CD4-positive, alpha-beta T cell (primary cell): ENCODE measurements at regions of chr5 and their contacts with region 1.

Region 1: DNA sequence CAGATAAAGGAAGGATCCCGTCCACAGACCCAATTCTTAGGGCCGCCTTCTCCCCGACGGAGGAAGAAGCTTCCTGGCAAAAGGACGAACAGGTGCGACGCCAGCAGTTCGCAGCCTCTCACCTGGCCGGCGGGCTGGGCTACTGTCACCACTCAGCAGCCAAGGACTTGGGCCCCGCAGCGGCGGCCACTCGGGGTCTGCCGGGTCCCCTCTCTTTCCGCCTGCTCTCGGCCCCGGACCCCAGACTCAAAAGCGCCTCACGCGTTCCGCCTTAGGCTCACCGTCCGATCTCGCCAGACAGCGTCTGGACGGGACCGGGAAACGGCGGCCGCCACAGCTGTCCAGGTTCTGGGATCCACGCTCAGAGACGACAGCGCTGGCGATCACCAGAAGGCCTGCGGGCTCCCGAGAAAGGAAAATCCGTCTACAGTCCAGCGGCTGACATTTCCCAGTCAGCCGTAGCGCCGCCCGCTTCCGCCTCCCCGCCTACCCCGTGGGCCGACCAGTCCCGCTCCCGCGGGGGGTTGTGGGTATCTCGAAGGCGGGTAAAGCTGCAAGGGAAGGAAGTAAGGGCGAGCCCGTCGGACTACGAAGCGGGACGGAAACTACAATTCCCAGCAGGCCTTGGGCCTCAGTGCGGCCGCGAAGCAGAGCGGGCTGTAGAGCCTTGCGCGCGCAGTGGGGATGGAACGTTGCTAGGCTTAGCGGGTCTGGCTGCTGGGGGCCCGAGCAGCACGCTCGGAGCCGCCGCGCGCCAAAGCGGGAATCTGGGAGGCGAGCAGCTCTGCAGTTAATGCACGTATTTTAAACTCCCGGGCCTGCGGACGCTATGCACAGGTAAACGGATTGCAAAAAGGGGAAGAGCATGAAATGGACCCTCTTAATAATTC is at the starts of genes LMBRD2 and SKP2:
- DNase-seq: peak; percentile 90 to 99 (median 95)
- ATAC-seq: peak; percentile 96
- H3K4me3 ChIP-seq: peak within 1 kb of the TSS; percentile 92
- H3K4me3 Mint-ChIP-seq: peak within 1 kb of the TSS; percentile 95
- H3K27ac ChIP-seq: peak within 1 kb of the TSS; percentile 77 to 82
- H3K27ac Mint-ChIP-seq: peak within 1 kb of the TSS; percentile 86
- H3K4me1 ChIP-seq: peaks cover 30% of the 10 kb centered on the region
- H3K4me1 Mint-ChIP-seq: peaks cover 76% of the 10 kb centered on the region
- H3K27me3 ChIP-seq: no peaks in the 10 kb centered on the region
- H3K27me3 Mint-ChIP-seq: no peaks in the 10 kb centered on the region
- CTCF ChIP-seq: no peak
- total RNA-seq, gene LMBRD2: 4.1 to 4.2 TPM
- total RNA-seq, gene SKP2: 6.3 to 7.2 TPM

Region 2: DNA sequence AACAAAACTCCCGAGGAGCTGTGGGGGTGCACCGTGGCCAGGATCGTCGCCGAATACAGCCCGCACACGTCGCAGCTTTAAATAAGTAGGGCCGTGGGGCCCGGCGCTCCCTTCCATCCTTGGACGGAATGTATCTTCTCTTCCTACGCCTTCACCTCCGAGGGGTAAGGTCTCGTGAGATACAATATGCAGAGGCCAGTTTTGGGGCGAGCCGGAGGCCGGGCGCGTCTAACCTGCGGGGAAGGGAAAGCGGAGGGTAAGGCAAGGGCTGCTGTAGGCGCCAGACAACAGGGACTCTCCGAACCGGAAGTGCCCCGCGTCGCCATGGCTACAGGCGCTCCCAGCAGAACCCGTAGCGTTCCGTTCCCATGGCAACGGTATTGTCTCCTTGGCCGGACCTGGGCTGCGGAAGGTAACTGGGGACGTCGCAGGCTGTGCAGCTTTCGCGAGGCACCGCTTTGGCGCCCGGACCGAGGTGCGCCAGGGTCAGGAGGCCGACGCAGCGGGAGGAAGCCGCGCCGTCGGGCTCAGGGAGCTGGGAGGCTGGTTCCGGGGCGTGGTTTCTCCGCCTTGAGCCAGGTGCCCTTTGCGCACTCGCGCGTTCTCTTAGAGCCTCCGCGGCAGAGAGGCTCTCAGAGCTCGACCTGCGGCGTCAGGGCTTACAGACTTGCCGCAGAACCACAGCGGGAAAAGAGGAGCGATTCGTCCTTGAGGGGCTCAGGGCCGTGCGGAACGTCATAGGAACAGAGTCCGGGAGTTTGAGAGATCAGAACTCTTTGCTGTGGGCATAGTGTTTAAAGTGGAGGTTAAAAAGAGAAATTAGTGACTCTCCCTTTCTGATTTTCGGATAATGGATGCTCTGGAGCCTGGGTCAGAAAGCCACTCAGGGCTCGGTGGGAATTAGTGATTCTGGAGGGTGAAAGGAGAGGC is 1312.6 kb before region 1 on chr5 and contains the start of gene TTC23L:
- CTCF ChIA-PET with region 1: no interaction called
- POLR2A ChIA-PET with region 1: no interaction called
- intact Hi-C with region 1: loop called in 1 of 2 experiments (anchors 10 kb)
- DNase-seq: peak; percentile 84 to 98 (median 87)
- ATAC-seq: peak; percentile 89
- H3K4me3 ChIP-seq: peak within 1 kb of the TSS; percentile 78
- H3K4me3 Mint-ChIP-seq: peak within 1 kb of the TSS; percentile 95
- H3K27ac ChIP-seq: peak within 1 kb of the TSS; percentile 63 to 76
- H3K27ac Mint-ChIP-seq: peak within 1 kb of the TSS; percentile 88
- H3K4me1 ChIP-seq: peaks cover 16% of the 10 kb centered on the region
- H3K4me1 Mint-ChIP-seq: peaks cover 17% of the 10 kb centered on the region
- H3K27me3 ChIP-seq: no peaks in the 10 kb centered on the region
- H3K27me3 Mint-ChIP-seq: peaks cover 8% of the 10 kb centered on the region
- CTCF ChIP-seq: no peak
- total RNA-seq, gene TTC23L: 0.20 TPM in 1 of 2 experiments, not detected in the other

Region 3: DNA sequence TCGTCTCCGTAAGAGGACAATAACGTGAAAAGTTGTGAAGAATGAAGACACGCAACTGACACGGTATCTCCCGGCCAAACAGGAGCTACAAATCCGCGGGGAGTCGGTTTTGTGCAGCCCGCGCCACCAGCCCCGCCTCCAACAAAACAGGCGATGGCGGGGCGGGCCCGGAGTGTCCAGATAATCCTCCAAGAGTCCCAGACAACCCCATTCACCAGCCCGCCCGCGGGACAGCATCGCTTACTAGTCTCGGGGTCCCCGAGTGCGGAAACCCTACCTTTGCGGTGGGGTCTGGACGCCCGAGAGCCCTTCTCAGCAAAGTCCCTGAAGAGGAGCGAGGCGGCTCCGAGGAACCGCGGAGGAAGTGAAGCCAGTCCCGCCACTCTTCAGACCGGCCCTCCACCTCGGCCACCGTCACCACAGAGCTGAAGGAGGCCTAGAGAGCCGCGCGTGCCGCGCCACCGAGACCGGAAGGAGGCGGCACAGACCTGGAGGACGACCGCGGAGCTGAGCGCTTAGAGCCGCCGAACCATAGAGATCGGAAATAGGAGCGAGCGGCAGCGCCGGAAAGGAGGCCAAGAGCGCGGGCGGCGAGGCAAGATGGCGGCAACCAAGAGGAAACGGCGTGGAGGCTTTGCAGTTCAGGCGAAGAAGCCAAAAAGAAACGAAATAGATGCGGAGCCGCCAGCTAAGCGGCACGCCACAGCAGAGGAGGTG is 1236.4 kb before region 1 on chr5 and contains the starts of genes BRIX1 and RAD1:
- CTCF ChIA-PET with region 1: no interaction called
- POLR2A ChIA-PET with region 1: interaction called, 4 read pairs
- intact Hi-C with region 1: loop called in 1 of 2 experiments (anchors 2 kb)
- DNase-seq: peak; percentile 87 to 97 (median 90)
- ATAC-seq: peak; percentile 96
- H3K4me3 ChIP-seq: peak within 1 kb of the TSS; percentile 91
- H3K4me3 Mint-ChIP-seq: peak within 1 kb of the TSS; percentile 77
- H3K27ac ChIP-seq: peak within 1 kb of the TSS; percentile 84 to 88
- H3K27ac Mint-ChIP-seq: no peak within 1 kb of the TSS
- H3K4me1 ChIP-seq: peaks cover 27% of the 10 kb centered on the region
- H3K4me1 Mint-ChIP-seq: peaks cover 35% of the 10 kb centered on the region
- H3K27me3 ChIP-seq: no peaks in the 10 kb centered on the region
- H3K27me3 Mint-ChIP-seq: no peaks in the 10 kb centered on the region
- CTCF ChIP-seq: no peak
- total RNA-seq, gene BRIX1: 29.7 to 30.2 TPM
- total RNA-seq, gene RAD1: 26.7 to 29.2 TPM

Region 4: DNA sequence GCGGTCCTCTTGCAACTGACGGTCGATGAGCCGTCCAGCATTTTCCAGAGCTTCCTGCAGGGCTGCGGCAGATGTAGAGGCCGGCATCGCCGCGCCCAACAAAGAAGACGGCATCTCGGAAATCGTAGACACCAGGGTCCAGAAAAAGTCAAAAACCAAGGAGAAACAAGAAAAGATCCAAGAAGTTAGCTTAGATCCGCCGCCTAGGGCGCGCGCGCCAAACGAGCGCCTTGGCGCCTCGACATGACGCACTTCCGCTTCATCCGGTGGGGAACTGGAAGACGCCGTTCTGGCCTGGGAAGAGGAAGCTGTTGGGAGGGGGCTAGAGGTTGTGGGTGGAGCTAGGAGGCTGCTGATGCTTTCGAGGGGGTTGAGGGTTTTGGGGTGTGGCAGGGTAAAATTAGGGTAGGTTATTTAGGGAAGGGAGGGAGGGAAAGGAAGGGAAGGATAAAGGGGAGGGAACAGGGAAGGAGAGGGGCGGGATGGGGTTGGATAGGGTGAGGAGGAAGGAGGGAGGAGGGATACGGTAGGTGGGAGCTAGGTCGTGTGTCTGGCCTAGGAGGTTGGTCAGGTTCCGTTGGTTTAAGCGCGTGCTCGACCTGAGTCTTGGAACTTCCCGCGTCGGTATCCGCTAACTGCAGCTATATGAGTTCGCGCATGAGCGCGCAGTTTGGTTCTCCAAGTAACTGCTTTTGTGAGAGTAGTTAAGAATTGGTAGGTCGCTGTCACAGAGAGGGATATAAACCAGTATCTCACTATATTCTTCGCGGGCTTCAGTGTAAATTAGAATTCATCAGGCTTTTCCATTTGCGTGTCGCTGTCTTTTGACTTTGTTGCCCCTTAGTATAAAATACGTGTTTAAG is 1219.4 kb after region 1 on chr5 and contains the start of gene NUP155:
- CTCF ChIA-PET with region 1: no interaction called
- POLR2A ChIA-PET with region 1: no interaction called
- intact Hi-C with region 1: loop called in 1 of 2 experiments (anchors 5 kb)
- DNase-seq: peak; percentile 75 to 96 (median 85)
- ATAC-seq: peak; percentile 93
- H3K4me3 ChIP-seq: peak within 1 kb of the TSS; percentile 95
- H3K4me3 Mint-ChIP-seq: peak within 1 kb of the TSS; percentile 97
- H3K27ac ChIP-seq: peak within 1 kb of the TSS; percentile 86
- H3K27ac Mint-ChIP-seq: peak within 1 kb of the TSS; percentile 96
- H3K4me1 ChIP-seq: peaks cover 27% of the 10 kb centered on the region
- H3K4me1 Mint-ChIP-seq: peaks cover 36% of the 10 kb centered on the region
- H3K27me3 ChIP-seq: no peaks in the 10 kb centered on the region
- H3K27me3 Mint-ChIP-seq: no peaks in the 10 kb centered on the region
- CTCF ChIP-seq: no peak
- total RNA-seq, gene NUP155: 21.6 to 26.0 TPM